Activated CD4-positive, alpha-beta memory T cell treated with anti-CD3 and anti-CD28 coated beads for 36 hours (primary cell): ENCODE measurements at regions of chr9 and their contacts with region 1.

Region 1: GRCh38 chr9:137721899-137722298 is 103.1 kb downstream of the EHMT1 start:
- DNase-seq: peak; percentile 64
- H3K4me3 Mint-ChIP-seq: peak overlapping the region; percentile 61
- H3K27ac Mint-ChIP-seq: peak overlapping the region; percentile 92
- H3K4me1 Mint-ChIP-seq: peaks cover 45% of the 10 kb centered on the region
- H3K27me3 Mint-ChIP-seq: no peaks in the 10 kb centered on the region

Region 2: GRCh38 chr9:137761032-137761431 is 39.1 kb after region 1 on chr9:
- CTCF ChIA-PET with region 1: interaction called, 4 read pairs
- POLR2A ChIA-PET with region 1: no interaction called
- intact Hi-C with region 1: loop called (anchors 1 kb)
- DNase-seq: peak; percentile 64
- H3K4me3 Mint-ChIP-seq: no peak overlapping the region
- H3K27ac Mint-ChIP-seq: peak overlapping the region; percentile 82
- H3K4me1 Mint-ChIP-seq: peaks cover 64% of the 10 kb centered on the region
- H3K27me3 Mint-ChIP-seq: no peaks in the 10 kb centered on the region

Region 3: DNA sequence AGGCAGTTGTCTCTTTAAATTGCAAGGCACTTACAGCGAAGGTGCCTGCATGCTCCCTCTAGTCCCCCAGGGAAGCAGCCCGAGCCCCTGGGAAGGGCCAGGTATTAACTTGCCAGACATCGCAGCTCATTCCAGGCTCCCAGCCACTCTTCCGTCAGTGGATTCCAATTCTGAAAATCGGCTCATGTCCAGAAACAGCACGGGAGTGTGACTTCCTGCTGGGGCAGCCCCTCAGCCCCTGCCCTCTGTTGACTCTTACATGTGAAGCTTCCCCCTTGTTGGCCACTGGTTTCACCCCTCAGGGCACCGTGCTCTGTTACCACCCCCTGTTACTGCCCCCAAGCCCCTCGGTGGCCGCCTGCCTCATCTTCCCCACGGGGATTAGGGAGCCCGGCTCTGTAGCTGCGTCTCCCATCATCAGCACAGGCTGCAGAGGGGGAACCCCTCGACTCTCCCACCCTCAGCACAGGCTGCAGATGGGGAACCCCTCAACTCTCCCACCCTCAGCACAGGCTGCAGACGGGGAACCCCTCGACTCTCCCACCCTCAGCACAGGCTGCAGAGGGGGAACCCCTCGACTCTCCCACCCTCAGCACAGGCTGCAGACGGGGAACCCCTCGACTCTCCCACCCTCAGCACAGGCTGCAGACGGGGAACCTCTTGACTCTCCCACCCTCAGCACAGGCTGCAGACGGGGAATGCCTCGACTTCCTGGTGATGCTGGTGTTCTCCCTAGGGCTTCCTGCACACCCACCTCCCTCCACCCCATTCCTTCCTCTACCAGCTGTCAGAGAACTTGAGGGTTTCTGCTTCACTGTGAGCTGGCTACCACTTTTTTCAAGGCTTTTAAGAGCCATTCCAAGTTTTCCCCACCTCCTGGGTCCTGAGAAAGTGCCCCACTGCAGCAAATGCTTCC is 144.6 kb after region 1 on chr9:
- CTCF ChIA-PET with region 1: no interaction called
- POLR2A ChIA-PET with region 1: no interaction called
- intact Hi-C with region 1: no loop called
- DNase-seq: no peak
- H3K4me3 Mint-ChIP-seq: no peak overlapping the region
- H3K27ac Mint-ChIP-seq: no peak overlapping the region
- H3K4me1 Mint-ChIP-seq: no peaks in the 10 kb centered on the region
- H3K27me3 Mint-ChIP-seq: peaks cover 17% of the 10 kb centered on the region